Ovary (tissue), 10 donors: ENCODE measurements at regions of chr15 and their contacts with region 1.

Region 1: GRCh38 chr15:100330629-100331215 is 11.1 kb downstream of the ADAMTS17 start:
- DNase-seq: no peak
- H3K4me3 ChIP-seq: no peak overlapping the region
- H3K27ac ChIP-seq: no peak overlapping the region
- H3K4me1 ChIP-seq: no peaks in the 10 kb centered on the region
- H3K27me3 ChIP-seq: no peaks in the 10 kb centered on the region
- CTCF ChIP-seq: no peak
- EP300 ChIP-seq: no peak
- POLR2A ChIP-seq: no peak

Region 2: DNA sequence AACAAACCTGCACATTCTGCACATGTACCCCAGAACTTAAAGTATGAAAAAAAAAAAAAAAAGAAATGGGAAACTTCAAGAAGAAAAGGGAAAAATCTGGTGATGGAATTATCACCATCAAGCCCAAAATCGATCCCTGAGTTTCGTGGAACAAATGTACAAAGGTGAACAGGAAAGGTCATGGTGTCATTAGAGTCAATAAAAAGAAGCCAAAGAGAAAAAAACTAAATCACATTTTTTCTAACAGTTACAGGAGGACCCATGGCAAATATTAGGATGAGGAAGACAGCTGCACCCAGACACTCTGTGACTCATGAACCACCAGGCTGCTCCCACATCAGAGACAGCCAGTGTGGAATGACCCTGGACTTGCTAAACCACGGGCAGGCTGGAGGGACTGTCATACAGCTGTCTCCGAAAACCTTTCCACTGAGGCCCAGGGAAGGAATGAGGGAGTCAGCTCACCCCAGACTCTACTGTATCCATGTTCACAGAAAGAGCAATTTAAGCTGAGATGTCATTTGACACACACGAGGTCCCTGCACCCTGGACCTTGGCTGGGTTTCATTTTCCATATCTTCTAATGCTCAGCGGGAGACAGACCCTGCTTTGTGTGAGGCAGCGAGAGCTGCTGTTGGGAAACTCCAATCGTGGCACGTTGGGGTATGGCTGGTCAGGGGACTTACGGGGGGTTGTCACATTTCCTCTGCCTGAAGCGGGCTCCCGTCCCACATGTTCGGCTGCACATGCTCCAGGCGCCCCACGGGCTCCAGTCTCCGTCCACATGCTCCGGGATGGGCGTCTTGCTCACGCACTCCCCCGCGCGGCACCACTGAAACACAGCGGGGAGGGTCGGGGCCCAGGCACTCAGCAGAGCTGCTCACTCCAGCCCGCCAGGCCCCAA is 199.1 kb before region 1 on chr15:
- intact Hi-C with region 1: loop called in 2 of 4 experiments (anchors 5 kb)
- DNase-seq: peak in 1 of 5 donors; percentile 43
- H3K4me3 ChIP-seq: no peak overlapping the region
- H3K27ac ChIP-seq: no peak overlapping the region
- H3K4me1 ChIP-seq: no peaks in the 10 kb centered on the region
- H3K27me3 ChIP-seq: no peaks in the 10 kb centered on the region
- CTCF ChIP-seq: no peak
- EP300 ChIP-seq: no peak
- POLR2A ChIP-seq: no peak

Region 3: GRCh38 chr15:100383302-100384107 is 52.8 kb after region 1 on chr15:
- intact Hi-C with region 1: no loop called
- DNase-seq: peak in 4 of 5 donors; percentile 17 to 46 (median 30)
- H3K4me3 ChIP-seq: no peak overlapping the region
- H3K27ac ChIP-seq: no peak overlapping the region
- H3K4me1 ChIP-seq: no peaks in the 10 kb centered on the region
- H3K27me3 ChIP-seq: no peaks in the 10 kb centered on the region
- CTCF ChIP-seq: peak in 2 of 3 donors; percentile 41 to 42
- EP300 ChIP-seq: no peak
- POLR2A ChIP-seq: no peak

Region 4: DNA sequence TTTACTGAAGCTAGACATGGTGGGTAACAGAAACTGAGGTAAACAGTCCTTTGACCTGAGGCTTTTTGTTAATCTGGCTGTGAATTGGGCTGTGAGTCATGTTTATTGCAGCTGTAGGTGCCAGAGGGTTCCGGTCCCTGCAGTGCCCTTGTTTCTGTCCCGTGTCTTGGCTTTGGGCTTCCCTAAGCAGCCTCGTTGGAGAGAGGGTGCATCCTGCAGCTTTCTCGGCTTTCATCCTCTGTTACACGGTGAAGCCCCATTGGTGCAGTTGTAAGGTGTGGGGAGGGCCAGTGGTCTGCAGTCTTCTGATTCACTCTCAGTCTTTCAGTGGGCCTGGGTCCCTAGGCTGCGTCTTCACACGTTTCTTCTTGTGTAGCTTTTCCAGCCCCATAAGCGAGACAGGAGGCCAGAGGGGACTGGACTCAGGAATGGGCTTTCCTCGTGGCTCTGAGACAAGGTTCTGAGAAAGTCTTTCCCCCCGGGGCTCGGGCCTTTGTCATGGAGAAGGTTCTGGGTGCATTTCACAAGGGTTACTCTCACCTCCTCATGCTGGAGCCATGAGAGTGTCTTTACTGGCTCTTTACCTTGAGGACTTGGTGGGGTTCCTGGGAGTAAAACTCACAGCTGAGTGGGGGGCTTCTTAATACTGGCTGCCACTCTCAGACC is 304.8 kb after region 1 on chr15:
- intact Hi-C with region 1: no loop called
- DNase-seq: no peak
- H3K4me3 ChIP-seq: no peak overlapping the region
- H3K27ac ChIP-seq: no peak overlapping the region
- H3K4me1 ChIP-seq: no peaks in the 10 kb centered on the region
- H3K27me3 ChIP-seq: no peaks in the 10 kb centered on the region
- CTCF ChIP-seq: no peak
- EP300 ChIP-seq: no peak
- POLR2A ChIP-seq: no peak